A549 (cell line): ENCODE measurements at regions of chr17 and their contacts with region 1.

Region 1: DNA sequence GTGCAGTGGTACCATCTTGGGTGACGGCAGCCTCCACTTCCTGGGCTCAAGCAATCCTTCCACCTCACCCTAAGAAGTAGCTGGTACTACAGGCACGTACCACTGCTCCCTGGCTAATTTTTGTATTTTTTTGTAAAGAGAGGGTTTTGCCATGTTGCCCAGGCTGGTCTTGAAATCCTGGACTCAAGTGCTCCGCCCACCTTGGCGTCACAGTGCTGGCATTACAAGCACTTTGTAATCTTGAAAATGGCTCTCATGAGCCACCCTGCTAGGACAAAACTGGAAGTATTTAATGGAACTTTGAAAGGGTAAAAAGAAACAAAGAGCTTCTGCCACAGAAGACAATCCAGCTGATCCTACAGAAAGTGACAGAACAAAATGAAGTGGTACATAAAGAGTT is 9.2 kb downstream of the SUMO2 start:
- DNase-seq: no peak
- ATAC-seq: no peak
- H3K4me3 ChIP-seq: no peak overlapping the region
- H3K27ac ChIP-seq: no peak overlapping the region
- H3K4me1 ChIP-seq: 0 out of 3 replicates have a peak, but pooled peaks cover 3% of the 10 kb centered on the region
- CTCF ChIP-seq: no peak
- EP300 ChIP-seq: no peak
- POLR2A ChIP-seq: no peak
- RAD21 ChIP-seq: no peak

Region 2: DNA sequence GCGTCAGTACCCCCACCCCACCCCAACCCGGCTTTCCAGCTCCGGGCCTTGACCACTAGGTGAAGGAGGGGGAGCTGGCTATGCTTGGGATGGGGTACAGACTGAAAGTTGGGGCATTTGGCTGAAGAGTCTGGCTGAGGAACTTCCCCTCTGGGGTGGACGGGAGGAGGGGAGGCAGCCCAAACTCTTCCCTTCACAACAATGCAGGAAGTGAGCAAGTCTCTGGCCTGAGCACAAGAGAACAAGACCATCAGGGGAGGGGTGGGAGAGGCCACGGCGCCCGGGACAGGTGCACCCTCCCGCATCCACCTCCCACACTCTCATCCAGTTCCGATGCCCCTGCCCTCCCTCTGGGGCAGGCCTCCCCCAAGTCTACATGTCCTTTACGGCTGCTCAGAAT is 256.1 kb before region 1 on chr17:
- CTCF ChIA-PET with region 1: no interaction called
- POLR2A ChIA-PET with region 1: no interaction called
- DNase-seq: no peak
- ATAC-seq: no peak
- H3K4me3 ChIP-seq: no peak overlapping the region
- H3K27ac ChIP-seq: no peak overlapping the region
- H3K4me1 ChIP-seq: peaks cover 5% of the 10 kb centered on the region; the same call in 1 of the 3 replicates
- CTCF ChIP-seq: no peak
- EP300 ChIP-seq: no peak
- POLR2A ChIP-seq: no peak
- RAD21 ChIP-seq: no peak

Region 3: DNA sequence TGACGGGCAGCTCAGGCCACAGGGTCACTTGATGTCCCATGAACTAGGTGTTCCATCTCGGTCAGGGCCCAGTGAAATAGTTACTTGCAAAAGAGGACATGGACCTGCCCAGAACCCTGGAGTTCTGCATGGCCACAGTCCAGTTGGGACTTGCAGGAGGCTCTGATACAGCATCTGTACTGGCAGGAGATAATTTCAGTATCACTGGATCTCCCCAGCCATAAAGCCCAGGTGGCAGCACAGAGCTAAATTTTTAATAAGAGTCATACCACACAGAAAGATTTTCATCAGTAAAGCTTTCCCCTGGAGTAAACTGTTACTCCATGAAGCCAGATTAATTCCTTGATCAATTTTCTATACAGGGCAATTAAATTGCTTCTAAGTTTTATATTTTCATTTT is 103.7 kb before region 1 on chr17:
- CTCF ChIA-PET with region 1: interaction called, 17 read pairs
- POLR2A ChIA-PET with region 1: no interaction called
- DNase-seq: peak; percentile 68 to 78
- ATAC-seq: peak; percentile 80 to 83
- H3K4me3 ChIP-seq: no peak overlapping the region
- H3K27ac ChIP-seq: no peak overlapping the region; a peak in 1 of 6 replicates
- H3K4me1 ChIP-seq: peaks cover 3% of the 10 kb centered on the region; the same call in 1 of the 3 replicates
- CTCF ChIP-seq: peak; percentile 78
- EP300 ChIP-seq: no peak
- POLR2A ChIP-seq: no peak
- RAD21 ChIP-seq: peak; percentile 80 to 83

Region 4: GRCh38 chr17:75131280-75132017 is 42.1 kb before region 1 on chr17 and contains the start of gene NT5C:
- CTCF ChIA-PET with region 1: interaction called, 27 read pairs
- POLR2A ChIA-PET with region 1: interaction called, 5 read pairs
- DNase-seq: peak; percentile 85 to 91
- ATAC-seq: peak; percentile 83 to 86
- H3K4me3 ChIP-seq: peak within 1 kb of the TSS; percentile 89
- H3K27ac ChIP-seq: peak within 1 kb of the TSS; percentile 97
- H3K4me1 ChIP-seq: peaks cover 40% of the 10 kb centered on the region
- CTCF ChIP-seq: peak; percentile 95
- EP300 ChIP-seq: no peak
- POLR2A ChIP-seq: peak; percentile 72
- RAD21 ChIP-seq: peak; percentile 58 to 77
- polyA plus RNA-seq, gene NT5C: 54.5 and 73.7 TPM in 2 replicates

Region 5: GRCh38 chr17:75154195-75155106 is 19.1 kb before region 1 on chr17 and contains the start of gene JPT1:
- CTCF ChIA-PET with region 1: interaction called, 26 read pairs
- POLR2A ChIA-PET with region 1: interaction called, 21 read pairs
- DNase-seq: peak; percentile 99 to 100
- ATAC-seq: peak; percentile 85 to 94
- H3K4me3 ChIP-seq: peak within 1 kb of the TSS; percentile 78
- H3K27ac ChIP-seq: peak within 1 kb of the TSS; percentile 85 to 95
- H3K4me1 ChIP-seq: peaks cover 54% of the 10 kb centered on the region
- CTCF ChIP-seq: no peak
- EP300 ChIP-seq: no peak
- POLR2A ChIP-seq: peak; percentile 100
- RAD21 ChIP-seq: no peak
- polyA plus RNA-seq, gene JPT1: 141 and 196 TPM in 2 replicates

Region 6: GRCh38 chr17:75191584-75191983 is 18.1 kb after region 1 on chr17:
- CTCF ChIA-PET with region 1: interaction called, 11 read pairs
- POLR2A ChIA-PET with region 1: no interaction called
- DNase-seq: no peak
- ATAC-seq: no peak
- H3K4me3 ChIP-seq: no peak overlapping the region
- H3K27ac ChIP-seq: no peak overlapping the region
- H3K4me1 ChIP-seq: peaks cover 7% of the 10 kb centered on the region; the same call in 1 of the 3 replicates
- CTCF ChIP-seq: no peak
- EP300 ChIP-seq: no peak
- POLR2A ChIP-seq: no peak
- RAD21 ChIP-seq: no peak

Region 7: GRCh38 chr17:75319904-75320691 is 146.6 kb after region 1 on chr17:
- CTCF ChIA-PET with region 1: no interaction called
- POLR2A ChIA-PET with region 1: no interaction called
- DNase-seq: no peak
- ATAC-seq: no peak
- H3K4me3 ChIP-seq: no peak overlapping the region
- H3K27ac ChIP-seq: no peak overlapping the region
- H3K4me1 ChIP-seq: no peaks in the 10 kb centered on the region
- CTCF ChIP-seq: no peak
- EP300 ChIP-seq: no peak
- POLR2A ChIP-seq: no peak
- RAD21 ChIP-seq: no peak